Kidney (tissue), 22 donors: ENCODE measurements at regions of chr5 and their contacts with region 1.

Region 1: GRCh38 chr5:98905857-98906690 is 22.7 kb downstream of the CHD1 start:
- DNase-seq: peak in 2 of 5 donors; percentile 65 to 72
- H3K4me3 ChIP-seq: no peak overlapping the region
- H3K27ac ChIP-seq: no peak overlapping the region
- H3K4me1 ChIP-seq: no peaks in the 10 kb centered on the region
- H3K27me3 ChIP-seq: no peaks in the 10 kb centered on the region
- CTCF ChIP-seq: peak; percentile 60

Region 2: GRCh38 chr5:98556712-98557111 is 349.4 kb before region 1 on chr5:
- intact Hi-C with region 1: no loop called
- DNase-seq: no peak
- H3K4me3 ChIP-seq: no peak overlapping the region
- H3K27ac ChIP-seq: no peak overlapping the region
- H3K4me1 ChIP-seq: no peaks in the 10 kb centered on the region
- H3K27me3 ChIP-seq: no peaks in the 10 kb centered on the region
- CTCF ChIP-seq: no peak

Region 3: GRCh38 chr5:98604721-98605425 is 301.2 kb before region 1 on chr5:
- intact Hi-C with region 1: no loop called
- DNase-seq: no peak
- H3K4me3 ChIP-seq: no peak overlapping the region
- H3K27ac ChIP-seq: no peak overlapping the region
- H3K4me1 ChIP-seq: no peaks in the 10 kb centered on the region
- H3K27me3 ChIP-seq: no peaks in the 10 kb centered on the region
- CTCF ChIP-seq: no peak

Region 4: GRCh38 chr5:99059685-99060084 is 153.6 kb after region 1 on chr5:
- intact Hi-C with region 1: loop called (anchors 10 kb)
- DNase-seq: no peak
- H3K4me3 ChIP-seq: no peak overlapping the region
- H3K27ac ChIP-seq: no peak overlapping the region
- H3K4me1 ChIP-seq: no peaks in the 10 kb centered on the region
- H3K27me3 ChIP-seq: no peaks in the 10 kb centered on the region
- CTCF ChIP-seq: no peak